Activated CD8-positive, alpha-beta memory T cell treated with anti-CD3 and anti-CD28 coated beads, Interleukin-2, amount 10 ng/mL, durations not matched to agents 7 days and 5 days (primary cell): ENCODE measurements at regions of chr22 and their contacts with region 1.

Region 1: GRCh38 chr22:18077639-18078328 is at the start of gene PEX26:
- DNase-seq: peak; percentile 98
- ATAC-seq: peak; percentile 99
- H3K4me3 Mint-ChIP-seq: peak within 1 kb of the TSS; percentile 97
- H3K27ac Mint-ChIP-seq: peak within 1 kb of the TSS; percentile 100
- H3K4me1 Mint-ChIP-seq: peaks cover 46% of the 10 kb centered on the region
- H3K27me3 Mint-ChIP-seq: no peaks in the 10 kb centered on the region
- total RNA-seq, gene PEX26: 38.9 to 46.8 TPM

Region 2: GRCh38 chr22:17742527-17742902 is 335.3 kb before region 1 on chr22:
- CTCF ChIA-PET with region 1: interaction called, 35 read pairs
- DNase-seq: peak; percentile 74
- ATAC-seq: peak; percentile 65
- H3K4me3 Mint-ChIP-seq: no peak overlapping the region
- H3K27ac Mint-ChIP-seq: no peak overlapping the region
- H3K4me1 Mint-ChIP-seq: no peaks in the 10 kb centered on the region
- H3K27me3 Mint-ChIP-seq: no peaks in the 10 kb centered on the region

Region 3: DNA sequence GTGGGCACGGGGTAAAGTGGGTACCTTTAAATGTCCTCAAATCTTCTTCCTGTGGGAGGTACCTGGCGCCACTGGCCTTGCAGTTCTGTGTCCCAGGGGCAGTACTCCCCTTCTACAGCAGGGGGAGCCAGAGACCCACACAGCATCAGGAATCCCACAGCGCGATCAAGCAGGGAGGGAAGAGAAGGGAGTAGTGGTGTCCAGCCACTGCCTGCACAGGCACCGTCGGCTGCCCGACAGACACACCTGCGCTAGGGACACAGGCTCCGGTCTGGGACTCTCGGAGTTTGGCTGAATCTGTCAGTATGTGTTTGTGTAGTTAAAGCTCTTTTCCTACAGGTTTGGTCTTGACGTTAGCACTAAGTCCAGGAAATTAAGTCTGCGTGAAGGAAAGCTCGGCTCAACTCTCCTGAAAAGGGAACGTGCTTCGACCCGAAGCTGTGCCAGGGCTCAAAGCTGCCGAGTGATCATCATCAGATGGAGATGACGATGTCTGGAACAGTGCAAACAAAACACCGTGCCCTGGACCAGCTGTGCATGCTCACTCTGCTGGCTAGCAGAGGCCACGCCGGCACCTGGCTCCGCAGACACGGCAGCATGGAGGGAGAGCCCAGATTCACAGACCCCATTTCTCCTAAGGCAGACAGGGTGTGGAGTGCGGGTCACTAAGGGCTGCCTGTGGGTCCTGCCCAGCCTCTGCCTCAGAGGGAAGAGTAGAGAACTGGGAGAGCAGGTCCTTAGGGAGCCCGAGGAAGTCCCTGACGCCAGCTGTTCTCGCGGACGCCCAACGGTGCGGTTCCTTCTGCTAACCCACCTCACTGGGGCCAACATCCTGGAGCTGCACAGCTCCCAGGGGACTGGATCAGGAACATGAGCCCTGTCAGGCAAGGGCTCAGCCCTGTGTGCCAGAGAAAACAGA is 247.5 kb before region 1 on chr22:
- CTCF ChIA-PET with region 1: interaction called, 107 read pairs
- DNase-seq: peak; percentile 85
- ATAC-seq: peak; percentile 95
- H3K4me3 Mint-ChIP-seq: no peak overlapping the region
- H3K27ac Mint-ChIP-seq: no peak overlapping the region
- H3K4me1 Mint-ChIP-seq: no peaks in the 10 kb centered on the region
- H3K27me3 Mint-ChIP-seq: no peaks in the 10 kb centered on the region

Region 4: DNA sequence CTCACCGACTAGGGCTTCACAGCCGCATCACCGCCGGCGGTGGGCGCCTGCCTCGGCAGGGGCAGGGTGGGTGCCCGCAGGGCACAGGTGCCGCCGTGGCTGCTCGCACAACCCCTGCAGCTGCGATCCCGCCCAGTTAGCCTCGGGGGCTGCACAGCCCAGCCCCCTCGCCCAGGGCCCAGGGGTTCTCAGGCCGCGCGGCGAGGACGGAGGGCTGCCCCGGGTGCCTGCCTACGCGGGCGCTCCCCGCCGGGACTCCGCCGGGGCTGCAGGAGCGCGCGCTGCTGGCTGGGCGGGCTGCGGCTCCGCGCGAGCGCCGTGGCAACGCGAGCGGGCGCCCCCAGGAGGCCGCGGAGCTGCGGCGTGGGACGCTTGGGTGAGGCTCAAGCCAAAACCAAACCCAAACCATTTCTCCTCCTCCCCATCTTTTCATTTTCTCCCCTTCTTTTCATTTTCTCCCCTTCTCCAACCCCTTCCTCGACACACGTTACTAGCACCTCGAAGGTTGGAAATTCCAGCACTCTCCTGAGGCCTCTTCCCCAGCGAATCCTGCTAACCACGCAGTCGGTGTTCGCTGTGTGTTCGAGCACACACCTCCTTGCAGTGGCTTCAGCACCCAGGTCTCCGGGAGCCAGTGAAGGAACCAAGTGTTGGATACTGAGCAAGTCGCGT is 53.4 kb before region 1 on chr22 and contains the start of gene MICAL3:
- CTCF ChIA-PET with region 1: interaction called, 17 read pairs
- DNase-seq: peak; percentile 74
- ATAC-seq: peak; percentile 94
- H3K4me3 Mint-ChIP-seq: peak within 1 kb of the TSS; percentile 76
- H3K27ac Mint-ChIP-seq: no peak within 1 kb of the TSS
- H3K4me1 Mint-ChIP-seq: peaks cover 19% of the 10 kb centered on the region
- H3K27me3 Mint-ChIP-seq: peaks cover 64% of the 10 kb centered on the region
- total RNA-seq, gene MICAL3: 38.8 to 41.7 TPM

Region 5: GRCh38 chr22:18065256-18065655 is 12.5 kb before region 1 on chr22:
- CTCF ChIA-PET with region 1: interaction called, 10 read pairs
- DNase-seq: no peak
- ATAC-seq: no peak
- H3K4me3 Mint-ChIP-seq: no peak overlapping the region
- H3K27ac Mint-ChIP-seq: no peak overlapping the region
- H3K4me1 Mint-ChIP-seq: peaks cover under 1% of the 10 kb centered on the region
- H3K27me3 Mint-ChIP-seq: peaks cover 55% of the 10 kb centered on the region